ENCODE measurements at regions of chr1 and their contacts with region 1.

Region 1: DNA sequence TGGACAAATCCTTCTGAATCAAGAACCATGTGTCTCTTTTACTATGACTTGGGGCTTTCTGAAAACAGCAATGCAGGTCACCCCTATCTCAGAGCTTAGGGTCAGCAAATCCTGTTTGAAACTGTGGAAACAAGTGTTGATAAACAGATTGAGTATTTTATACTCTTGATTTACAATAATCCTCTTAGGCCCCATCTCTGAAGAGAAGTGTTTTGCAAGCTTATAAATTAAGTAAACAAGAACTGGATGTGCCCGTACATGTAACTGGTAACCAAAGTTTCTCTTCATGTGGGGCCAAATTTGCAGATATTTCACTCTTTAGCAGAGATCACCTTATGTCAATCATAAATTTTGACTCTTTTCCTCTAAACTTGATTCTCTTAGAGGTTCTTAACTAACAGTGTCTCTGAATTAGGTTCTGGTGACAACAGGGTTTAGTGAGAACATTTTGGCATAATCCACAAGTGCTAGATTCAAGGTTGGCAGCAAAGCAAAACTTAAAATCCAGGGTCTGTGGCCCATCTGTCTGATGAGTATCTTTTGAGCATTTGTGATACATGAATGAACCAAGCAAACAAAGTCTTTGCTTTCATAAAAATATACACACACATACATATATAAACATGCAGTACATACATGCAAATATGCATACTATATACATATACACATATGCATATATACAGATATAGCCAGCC is 183.0 kb upstream of the HOOK1 start:
- DNase-seq: peak; percentile 29
- H3K4me3 Mint-ChIP-seq: no peak overlapping the region
- H3K27ac Mint-ChIP-seq: peak overlapping the region; percentile 88
- H3K4me1 Mint-ChIP-seq: peaks cover 7% of the 10 kb centered on the region
- H3K27me3 Mint-ChIP-seq: no peaks in the 10 kb centered on the region
- CTCF ChIP-seq: no peak

Region 2: DNA sequence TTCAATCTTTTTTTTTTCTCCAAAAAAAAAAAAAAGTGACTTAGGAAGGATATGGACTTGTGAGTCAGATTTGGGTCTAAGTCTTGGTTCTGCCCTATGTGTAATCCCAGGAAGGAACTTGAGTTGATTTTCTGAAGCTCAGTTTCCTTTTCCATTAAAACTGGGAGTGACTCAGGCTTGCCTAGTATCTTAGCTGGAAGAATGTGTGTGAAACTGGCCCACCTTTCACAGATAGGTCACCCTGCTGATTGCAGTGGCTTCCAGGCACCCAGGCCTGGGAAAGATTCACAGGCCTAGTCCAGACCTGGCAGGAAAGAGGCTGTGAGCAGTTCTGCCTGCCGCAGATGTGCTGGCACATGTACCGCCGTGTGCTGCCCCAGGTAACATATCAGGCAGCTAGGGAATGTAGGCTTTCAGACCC is 35.3 kb before region 1 on chr1:
- CTCF ChIA-PET with region 1: interaction called, 3 read pairs
- POLR2A ChIA-PET with region 1: interaction called, 10 read pairs
- intact Hi-C with region 1: no loop called
- DNase-seq: peak; percentile 71
- H3K4me3 Mint-ChIP-seq: no peak overlapping the region
- H3K27ac Mint-ChIP-seq: peak overlapping the region; percentile 59
- H3K4me1 Mint-ChIP-seq: peaks cover 19% of the 10 kb centered on the region
- H3K27me3 Mint-ChIP-seq: no peaks in the 10 kb centered on the region
- CTCF ChIP-seq: no peak

Measured in MCF 10A (cell line).